Right ventricle myocardium inferior (tissue), 1 donor: ENCODE measurements at regions of chr11 and their contacts with region 1.

Region 1: GRCh38 chr11:109071712-109072524 is 350.1 kb upstream of the C11orf87 start:
- DNase-seq: no peak
- ATAC-seq: peak; percentile 85

Region 2: GRCh38 chr11:108967571-108967970 is 104.3 kb before region 1 on chr11:
- intact Hi-C with region 1: loop called (anchors 2 kb)
- DNase-seq: no peak
- ATAC-seq: peak; percentile 93

Region 3: DNA sequence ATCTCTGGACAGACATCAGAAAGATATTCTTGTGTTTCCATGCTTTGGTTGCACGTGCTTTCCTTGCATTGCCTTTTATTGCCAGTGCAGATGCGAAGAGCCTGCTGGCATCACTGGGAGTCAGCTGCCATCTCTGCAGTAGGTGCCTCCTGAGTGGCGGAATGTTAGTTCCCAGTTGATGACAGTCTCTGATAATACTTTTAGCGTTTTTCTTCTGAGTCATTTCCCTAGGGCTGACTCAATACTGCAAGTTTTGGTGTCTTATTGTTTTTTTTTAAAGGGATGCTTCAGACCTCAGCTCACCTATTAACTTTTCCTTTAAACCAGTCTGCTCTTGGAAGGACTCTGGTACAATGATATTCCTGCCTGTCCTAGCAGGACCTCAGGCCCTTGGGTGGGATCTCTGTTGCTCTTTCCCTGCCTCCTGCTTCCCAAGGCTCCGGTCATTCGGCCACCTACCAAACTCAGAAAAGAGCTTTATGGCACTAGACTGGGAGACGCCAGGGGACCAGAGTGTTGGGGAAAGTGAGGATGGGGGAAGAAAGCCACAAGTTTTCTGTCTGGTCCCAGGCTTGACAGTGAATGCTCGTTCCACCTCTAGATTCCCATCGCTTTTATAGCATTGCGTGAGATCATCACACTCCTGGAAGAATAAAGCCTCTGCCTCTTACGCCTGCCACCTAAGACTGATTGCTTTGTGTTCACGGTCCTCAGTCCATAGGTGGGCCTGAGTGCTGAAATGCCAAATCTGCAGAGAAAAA is 98.3 kb before region 1 on chr11:
- intact Hi-C with region 1: loop called (anchors 2 kb)
- DNase-seq: no peak
- ATAC-seq: no peak

Region 4: GRCh38 chr11:109123816-109124787 is 52.2 kb after region 1 on chr11:
- intact Hi-C with region 1: loop called (anchors 5 kb)
- DNase-seq: peak; percentile 70
- ATAC-seq: peak; percentile 94

Region 5: DNA sequence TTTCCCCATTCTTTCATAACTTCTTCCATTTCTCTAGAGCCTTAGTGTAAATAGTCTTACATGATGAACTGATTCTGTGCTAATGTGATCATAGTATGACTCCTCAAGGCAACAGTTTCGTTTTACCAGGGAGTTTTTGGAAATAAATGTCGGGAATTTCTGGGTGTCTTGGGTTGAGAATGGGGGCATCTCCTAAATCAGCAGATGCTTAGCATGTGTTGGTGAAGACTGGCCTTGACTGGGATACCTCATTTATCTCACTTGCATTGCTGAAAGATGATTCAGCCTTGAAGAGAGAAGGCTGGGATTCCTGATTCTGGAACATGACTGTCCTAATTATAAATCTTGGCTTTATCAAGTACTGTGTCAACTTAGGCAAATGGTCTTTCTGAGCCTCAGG is 234.4 kb after region 1 on chr11:
- intact Hi-C with region 1: loop called (anchors 1 kb)
- DNase-seq: no peak
- ATAC-seq: no peak